Gastrocnemius medialis (tissue), 4 donors: ENCODE measurements at regions of chrX and their contacts with region 1.

Region 1: DNA sequence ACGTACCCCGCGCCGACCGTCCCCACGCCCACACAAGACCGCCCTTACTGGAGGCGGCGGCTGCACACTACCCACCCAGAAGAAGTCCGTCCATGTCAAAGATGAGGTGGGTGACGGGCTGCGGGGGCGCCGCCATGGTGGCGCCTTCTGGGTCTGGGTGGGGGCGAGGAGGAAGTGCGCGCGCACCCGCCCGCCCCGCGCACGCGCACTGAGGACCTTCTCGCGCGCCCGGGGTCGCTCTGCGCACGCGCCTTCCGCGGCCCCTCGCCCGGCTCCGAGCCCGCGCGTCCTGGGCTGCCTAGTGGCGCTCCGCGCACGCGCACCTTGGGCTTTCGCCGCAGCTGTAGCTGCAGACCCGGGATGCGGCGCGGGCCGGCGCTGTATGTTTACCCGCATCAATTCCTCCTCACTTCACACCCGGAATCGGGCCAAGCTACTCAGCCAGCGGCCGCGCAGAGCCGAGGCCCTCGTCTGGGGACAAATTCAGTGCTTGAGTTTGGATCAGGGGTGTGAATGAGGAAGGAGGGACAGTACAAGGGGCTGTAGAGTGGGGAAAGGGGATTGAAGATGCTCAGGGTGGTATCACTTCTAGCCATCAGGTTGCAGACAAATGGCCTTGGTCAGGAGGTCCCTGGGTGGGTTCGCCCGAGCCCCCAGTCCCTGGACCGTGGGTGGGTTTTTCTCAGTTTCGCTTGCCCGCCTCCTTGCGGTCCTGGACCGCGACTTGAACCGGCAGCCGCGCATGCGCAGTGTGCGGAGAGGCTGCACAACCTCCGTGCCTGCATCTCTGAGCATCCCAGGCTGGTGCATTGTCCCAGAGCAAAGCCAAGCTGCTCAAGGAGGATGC is at the start of gene PUDP:
- DNase-seq: peak; percentile 56 to 77
- ATAC-seq: peak; percentile 80 to 89
- H3K4me3 ChIP-seq: peak within 1 kb of the TSS; percentile 73 to 94 (median 80)
- H3K27ac ChIP-seq: peak within 1 kb of the TSS; percentile 84 to 91 (median 86)
- H3K4me1 ChIP-seq: peaks cover 0 to 14% of the 10 kb centered on the region in 2 donors
- H3K27me3 ChIP-seq: no peaks in the 10 kb centered on the region
- CTCF ChIP-seq: peak; percentile 3 to 61 (median 24)
- POLR2A ChIP-seq: peak; percentile 70 to 74
- total RNA-seq, gene PUDP: 7.2 to 31.2 (median 22.8) TPM

Region 2: DNA sequence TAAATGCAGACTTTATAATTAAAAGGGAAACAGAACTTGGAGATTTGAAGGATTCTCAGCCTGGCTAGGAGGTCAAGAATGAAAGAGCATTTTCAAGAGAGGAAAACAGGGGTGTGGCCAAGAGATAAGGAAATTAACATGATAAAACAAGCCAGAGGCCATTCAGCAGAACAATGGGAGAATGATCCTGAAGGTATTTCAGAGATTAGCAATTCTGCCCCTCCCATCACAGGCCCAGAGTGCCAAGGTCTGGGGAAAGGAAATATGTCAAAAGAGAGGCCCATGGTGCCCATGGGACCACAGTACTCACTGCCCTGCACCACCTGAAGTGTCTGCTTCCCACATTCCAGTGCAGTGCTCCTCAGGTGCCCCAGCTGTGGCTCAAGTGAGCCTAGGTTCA is 189.2 kb before region 1 on chrX:
- in situ Hi-C with region 1: no loop called
- intact Hi-C with region 1: no loop called
- DNase-seq: no peak
- ATAC-seq: no peak
- H3K4me3 ChIP-seq: no peak overlapping the region
- H3K27ac ChIP-seq: no peak overlapping the region
- H3K4me1 ChIP-seq: no peaks in the 10 kb centered on the region
- H3K27me3 ChIP-seq: no peaks in the 10 kb centered on the region
- CTCF ChIP-seq: no peak
- POLR2A ChIP-seq: no peak

Region 3: GRCh38 chrX:7059214-7059838 is 88.9 kb before region 1 on chrX:
- in situ Hi-C with region 1: no loop called
- intact Hi-C with region 1: loop called (anchors 10 kb)
- DNase-seq: no peak
- ATAC-seq: no peak
- H3K4me3 ChIP-seq: no peak overlapping the region
- H3K27ac ChIP-seq: no peak overlapping the region
- H3K4me1 ChIP-seq: peaks cover 0 to 3% of the 10 kb centered on the region in 2 donors
- H3K27me3 ChIP-seq: no peaks in the 10 kb centered on the region
- CTCF ChIP-seq: no peak
- POLR2A ChIP-seq: no peak

Region 4: GRCh38 chrX:7925867-7926472 is 777.8 kb after region 1 on chrX:
- in situ Hi-C with region 1: no loop called
- intact Hi-C with region 1: loop called (anchors 5 kb)
- DNase-seq: peak; percentile 4 to 44
- ATAC-seq: peak; percentile 43 to 60
- H3K4me3 ChIP-seq: no peak overlapping the region
- H3K27ac ChIP-seq: peak overlapping the region in 2 of 4 donors; percentile 85 to 88
- H3K4me1 ChIP-seq: peaks cover 0 to 7% of the 10 kb centered on the region in 2 donors
- H3K27me3 ChIP-seq: no peaks in the 10 kb centered on the region
- CTCF ChIP-seq: peak in 4 of 5 experiments; percentile 25 to 68 (median 40)
- POLR2A ChIP-seq: no peak